Posterior vena cava (tissue), 2 donors: ENCODE measurements at regions of chr11 and their contacts with region 1.

Region 1: GRCh38 chr11:114135737-114136151 is 76.2 kb downstream of the ZBTB16 start:
- DNase-seq: no peak

Region 2: GRCh38 chr11:114110952-114111947 is 24.5 kb before region 1 on chr11:
- intact Hi-C with region 1: no loop called
- DNase-seq: no peak

Region 3: DNA sequence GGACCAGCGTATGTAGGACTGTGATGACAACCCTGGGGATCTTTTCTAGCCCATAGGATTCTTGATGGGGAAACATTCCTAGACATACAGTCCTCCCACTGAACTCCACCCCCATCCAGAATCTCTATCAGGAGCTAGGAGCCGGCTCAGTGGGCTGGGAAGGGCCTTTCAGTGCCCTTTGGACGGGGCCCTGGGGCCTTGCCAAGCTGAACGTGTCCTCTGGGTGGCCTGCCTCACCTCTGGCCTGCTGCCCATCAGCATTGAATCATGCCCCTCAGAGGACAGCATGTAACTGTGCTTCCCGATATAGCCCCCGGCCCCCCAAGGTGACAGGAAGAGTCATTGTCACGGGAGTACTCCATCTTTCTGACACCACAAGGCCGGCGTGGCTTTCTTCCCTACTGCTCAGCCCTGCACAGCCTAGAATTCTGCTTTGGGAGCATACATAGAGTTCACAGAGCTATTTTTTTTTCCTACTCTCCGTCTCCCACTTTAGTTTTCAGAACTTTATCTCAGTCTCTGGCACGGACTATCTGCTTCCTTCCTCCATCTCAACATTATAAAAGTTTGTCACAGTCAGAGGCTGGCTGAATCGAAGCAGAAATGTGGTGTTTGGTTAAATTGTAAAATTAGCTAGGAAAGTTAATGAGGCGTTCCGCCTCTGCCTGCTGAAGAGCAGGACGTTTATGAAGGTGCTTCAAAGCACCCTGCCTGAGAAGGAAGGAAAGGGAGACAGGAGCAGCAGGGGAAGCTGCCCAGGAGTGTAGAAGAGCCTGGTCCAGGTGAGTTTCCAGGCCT is 35.7 kb after region 1 on chr11:
- intact Hi-C with region 1: loop called in 1 of 2 experiments (anchors 5 kb)
- DNase-seq: peak; percentile 97